ENCODE measurements at regions of chr2 and their contacts with region 1.

Region 1: DNA sequence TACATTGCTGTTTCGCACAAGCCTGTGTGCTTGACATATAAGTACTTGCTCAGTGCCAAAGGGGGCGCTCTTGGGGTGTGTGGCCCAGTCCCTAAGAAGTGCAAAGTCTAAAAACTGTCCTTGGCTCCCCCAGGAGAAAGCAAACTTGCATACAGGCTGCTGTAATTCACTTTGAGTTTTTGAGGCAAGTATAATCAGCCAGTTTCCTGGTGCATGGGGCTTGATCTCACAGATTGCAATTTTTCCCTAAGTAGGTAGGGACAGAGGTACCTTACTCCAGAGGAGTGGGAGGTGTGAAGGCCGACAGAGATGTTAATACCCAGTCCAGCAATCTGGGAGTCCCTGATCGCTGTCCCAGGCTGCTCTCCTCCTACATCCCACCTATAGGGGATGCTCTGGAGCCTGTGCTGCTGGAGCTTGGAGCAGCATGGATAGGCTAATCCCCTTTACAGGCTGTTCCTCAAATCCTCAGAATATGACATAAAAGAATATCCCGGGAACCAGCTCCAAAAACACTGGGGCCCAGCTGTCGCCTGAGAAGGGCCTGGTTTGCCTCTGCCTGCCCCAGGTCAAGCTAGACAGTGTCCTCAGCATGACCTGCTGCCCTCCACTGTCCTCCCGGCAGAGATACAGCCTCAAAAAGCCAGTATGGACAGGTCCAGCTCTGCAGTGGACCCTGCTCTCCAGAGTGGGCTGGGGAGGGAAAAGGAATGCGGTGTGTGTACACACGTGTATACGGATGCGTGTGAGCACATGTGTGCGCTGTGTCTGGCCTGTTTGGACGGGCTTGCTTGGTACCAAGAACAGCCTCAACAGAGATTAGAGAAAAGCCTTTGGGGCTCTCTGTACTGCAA is 136.5 kb upstream of the HAAO start:
- DNase-seq: no peak
- H3K4me3 Mint-ChIP-seq: no peak overlapping the region
- H3K27ac Mint-ChIP-seq: no peak overlapping the region
- H3K4me1 Mint-ChIP-seq: no peaks in the 10 kb centered on the region
- H3K27me3 Mint-ChIP-seq: no peaks in the 10 kb centered on the region

Region 2: GRCh38 chr2:42743413-42743972 is 185.4 kb before region 1 on chr2:
- CTCF ChIA-PET with region 1: no interaction called
- POLR2A ChIA-PET with region 1: no interaction called
- intact Hi-C with region 1: no loop called
- DNase-seq: no peak
- H3K4me3 Mint-ChIP-seq: no peak overlapping the region
- H3K27ac Mint-ChIP-seq: no peak overlapping the region
- H3K4me1 Mint-ChIP-seq: no peaks in the 10 kb centered on the region
- H3K27me3 Mint-ChIP-seq: no peaks in the 10 kb centered on the region

Region 3: DNA sequence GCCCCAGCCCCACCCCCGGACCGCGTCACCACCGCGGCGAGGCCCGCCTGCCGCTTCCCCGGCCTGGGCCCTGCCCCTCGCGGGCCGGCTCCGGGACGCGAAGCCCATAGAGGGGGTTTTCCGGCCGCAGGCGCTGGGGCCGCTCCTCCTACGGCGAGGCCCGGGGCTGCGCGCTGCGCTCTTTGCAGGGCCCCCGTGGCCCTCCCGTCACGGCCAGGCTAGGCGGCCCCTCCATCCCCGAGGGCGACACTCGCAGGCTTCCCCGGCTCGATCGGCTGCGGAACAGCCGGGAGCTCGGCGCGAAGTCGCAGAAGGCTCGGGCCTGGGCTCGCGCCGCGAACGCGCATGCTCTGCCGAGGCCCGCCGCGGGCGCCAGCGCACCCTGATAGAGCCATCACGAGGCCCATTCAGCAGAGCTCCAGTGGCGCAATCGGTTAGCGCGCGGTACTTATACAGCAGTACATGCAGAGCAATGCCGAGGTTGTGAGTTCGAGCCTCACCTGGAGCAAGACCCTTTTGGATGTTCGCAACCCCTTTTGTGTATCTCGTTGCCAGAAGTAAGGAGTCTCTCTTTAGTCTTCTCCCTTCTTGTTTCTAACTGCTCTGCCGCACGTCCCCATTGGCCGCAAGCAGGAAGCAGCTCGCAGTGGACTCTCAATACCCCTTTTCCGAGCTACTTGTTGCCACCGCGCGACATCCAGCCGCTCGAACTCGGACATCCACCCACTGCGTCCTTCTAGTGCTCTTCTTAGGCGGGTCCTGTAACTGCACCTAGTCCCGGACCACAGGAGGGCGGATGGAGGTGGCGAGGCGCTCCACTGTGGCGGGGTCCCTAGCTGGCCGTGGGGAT is 118.6 kb before region 1 on chr2:
- CTCF ChIA-PET with region 1: no interaction called
- POLR2A ChIA-PET with region 1: no interaction called
- intact Hi-C with region 1: no loop called
- DNase-seq: peak; percentile 97
- H3K4me3 Mint-ChIP-seq: peak overlapping the region; percentile 95
- H3K27ac Mint-ChIP-seq: peak overlapping the region; percentile 100
- H3K4me1 Mint-ChIP-seq: peaks cover 12% of the 10 kb centered on the region
- H3K27me3 Mint-ChIP-seq: peaks cover 4% of the 10 kb centered on the region

Region 4: DNA sequence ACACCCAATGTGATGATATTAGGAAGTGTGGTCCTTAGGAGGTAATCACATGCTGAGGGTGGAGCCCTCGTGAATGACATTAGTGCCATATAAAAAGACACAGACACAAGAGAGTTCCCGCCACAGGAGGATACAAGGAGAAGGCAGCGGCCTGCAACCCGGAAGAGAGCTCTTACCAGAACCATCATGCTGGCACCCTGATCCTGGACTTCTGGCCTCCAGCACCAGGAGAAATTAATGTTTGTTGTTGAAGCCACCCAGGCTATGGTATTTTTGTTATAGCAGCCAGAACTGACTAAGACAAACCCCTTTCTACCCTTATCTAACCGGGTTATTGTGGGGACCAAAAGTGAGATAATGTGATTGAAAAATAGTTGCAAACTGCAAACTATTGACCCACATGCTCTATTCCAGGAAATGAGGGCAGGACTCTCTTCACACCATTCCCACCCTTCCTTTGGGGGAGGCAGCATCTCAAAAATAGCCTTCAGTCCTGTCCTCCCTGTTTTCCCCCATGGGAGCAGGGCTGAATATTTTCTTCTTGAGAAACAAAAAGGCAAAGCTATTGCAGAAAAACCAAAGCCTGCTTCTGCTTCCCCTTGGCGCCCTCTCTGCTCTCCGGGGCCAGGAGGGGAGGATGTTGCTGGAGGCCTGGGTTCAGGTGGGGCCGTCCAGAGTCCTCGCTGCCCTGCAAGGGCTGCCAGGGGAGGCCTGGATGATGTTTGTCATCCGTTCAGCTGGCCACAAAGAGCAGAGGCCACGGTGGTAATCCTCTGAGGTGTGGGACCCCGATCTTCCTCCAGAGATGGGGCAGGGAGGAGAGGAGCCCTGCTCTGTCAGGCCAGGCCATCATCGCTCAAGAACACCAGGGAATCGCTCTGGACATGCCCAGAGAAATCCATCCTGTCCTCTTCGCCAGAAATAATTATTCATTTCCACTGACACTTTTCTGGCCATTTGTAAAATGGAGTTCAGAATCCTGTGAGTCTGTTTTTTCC is 62.7 kb before region 1 on chr2:
- CTCF ChIA-PET with region 1: no interaction called
- POLR2A ChIA-PET with region 1: no interaction called
- intact Hi-C with region 1: loop called (anchors 10 kb)
- DNase-seq: no peak
- H3K4me3 Mint-ChIP-seq: no peak overlapping the region
- H3K27ac Mint-ChIP-seq: no peak overlapping the region
- H3K4me1 Mint-ChIP-seq: no peaks in the 10 kb centered on the region
- H3K27me3 Mint-ChIP-seq: peaks cover 1% of the 10 kb centered on the region

Measured in activated CD4-positive, alpha-beta memory T cell treated with anti-CD3 and anti-CD28 coated beads for 36 hours (primary cell).